ENCODE measurements at regions of chr7 and their contacts with region 1.

Region 1: DNA sequence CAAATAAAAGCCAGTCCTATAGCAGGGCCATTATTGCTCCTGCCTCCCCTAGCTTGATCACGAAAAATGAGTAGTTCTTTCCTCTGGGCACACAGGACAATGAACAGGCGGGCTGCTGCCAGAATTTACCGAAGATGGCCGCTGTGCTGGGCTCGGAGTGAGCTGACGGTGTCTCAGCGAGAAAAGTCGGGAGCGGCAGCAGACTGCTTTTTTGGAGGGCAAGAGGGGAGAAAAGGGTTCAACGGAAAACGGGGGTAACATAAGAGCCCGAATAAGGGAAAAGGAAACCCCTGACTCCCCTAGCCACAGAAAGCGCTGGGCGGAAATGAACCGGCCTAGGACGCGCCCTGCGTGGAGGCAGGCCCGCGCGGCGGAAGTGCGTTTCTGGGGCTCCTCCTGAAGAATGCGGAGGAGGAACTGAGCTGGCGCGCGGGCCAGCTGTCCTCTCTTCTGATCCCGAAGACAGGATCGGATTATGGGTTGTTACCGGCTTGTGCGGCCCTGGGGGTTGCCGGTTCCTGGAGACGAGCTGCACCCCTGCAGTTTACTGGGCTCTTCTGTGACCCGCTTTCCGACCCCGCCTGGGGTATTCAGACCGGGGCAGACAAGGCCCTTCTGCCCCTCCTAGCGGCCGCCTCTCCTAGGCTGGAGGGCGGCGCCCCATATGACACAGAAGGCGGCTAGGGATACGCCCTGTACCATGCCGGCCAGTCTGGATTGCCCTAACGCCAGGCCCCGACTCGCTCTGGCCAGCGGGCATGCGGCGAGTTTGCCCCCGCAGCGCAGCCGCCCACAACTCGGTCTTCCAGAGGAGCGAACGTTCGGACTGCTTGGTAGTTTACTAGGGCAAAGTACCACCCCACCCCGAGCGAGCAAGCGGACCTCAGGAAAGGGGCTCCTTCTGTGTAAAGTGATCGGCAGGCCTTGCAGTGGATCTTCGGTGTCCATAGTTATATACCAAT is 30.1 kb upstream of the KMT2E start:
- DNase-seq: peak; percentile 77
- ATAC-seq: peak; percentile 95
- H3K4me3 ChIP-seq: peak overlapping the region; percentile 68 to 76
- H3K27ac ChIP-seq: peak overlapping the region; percentile 91
- H3K4me1 ChIP-seq: peaks cover 31 to 40% of the 10 kb centered on the region in 2 experiments
- H3K27me3 ChIP-seq: no peaks in the 10 kb centered on the region
- CTCF ChIP-seq: peak in 2 of 3 experiments; percentile 22 to 39; a peak in 4 of 6 replicates
- POLR2A ChIP-seq: peak; percentile 72
- RAD21 ChIP-seq: no peak

Region 2: GRCh38 chr7:104943502-104944343 is 40.1 kb before region 1 on chr7:
- CTCF ChIA-PET with region 1: interaction called, 14 read pairs
- POLR2A ChIA-PET with region 1: no interaction called
- RAD21 ChIA-PET with region 1: no interaction called
- intact Hi-C with region 1: no loop called
- DNase-seq: peak; percentile 94
- ATAC-seq: peak; percentile 81
- H3K4me3 ChIP-seq: no peak overlapping the region
- H3K27ac ChIP-seq: peak overlapping the region; percentile 7; the same call in 1 of the 2 replicates
- H3K4me1 ChIP-seq: peaks cover 27 to 35% of the 10 kb centered on the region in 2 experiments
- H3K27me3 ChIP-seq: peaks cover 4% of the 10 kb centered on the region; the same call in 1 of the 2 replicates
- CTCF ChIP-seq: no peak
- POLR2A ChIP-seq: no peak
- RAD21 ChIP-seq: no peak

Region 3: DNA sequence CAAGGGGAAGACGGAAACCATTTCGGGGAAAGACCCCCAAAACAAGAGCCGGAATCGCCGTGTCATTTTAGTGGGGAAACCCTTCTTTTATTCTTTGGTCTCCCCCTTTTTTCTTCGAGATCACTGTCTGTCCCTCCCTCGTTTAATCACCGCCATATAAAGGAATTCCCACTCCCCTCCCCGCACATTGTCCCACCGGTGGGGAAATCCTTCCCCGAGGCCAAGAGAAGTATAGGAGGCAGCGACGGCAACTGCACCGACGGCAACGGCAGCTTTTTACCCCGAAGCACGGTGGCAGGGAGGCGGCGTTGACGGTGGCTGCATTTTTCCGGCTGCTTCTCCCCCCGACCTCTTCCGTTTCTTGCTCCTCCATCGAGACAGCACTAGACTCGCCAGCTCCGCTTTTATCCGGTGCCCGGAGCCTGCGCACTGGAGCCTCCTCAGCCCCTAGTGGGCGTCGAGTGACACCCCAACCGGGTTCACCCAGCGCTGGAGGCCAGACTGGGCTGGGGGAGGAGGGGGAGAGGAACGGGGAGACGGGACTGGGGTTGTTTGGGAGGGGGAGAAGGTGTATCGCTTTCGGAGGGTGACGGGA is 29.5 kb after region 1 on chr7:
- CTCF ChIA-PET with region 1: interaction called, 7 read pairs
- POLR2A ChIA-PET with region 1: interaction called, 18 read pairs
- RAD21 ChIA-PET with region 1: no interaction called
- intact Hi-C with region 1: loop called (anchors 1 kb)
- DNase-seq: peak; percentile 77
- ATAC-seq: peak; percentile 69
- H3K4me3 ChIP-seq: peak overlapping the region; percentile 89 to 95
- H3K27ac ChIP-seq: peak overlapping the region; percentile 98
- H3K4me1 ChIP-seq: peaks cover 11 to 49% of the 10 kb centered on the region in 2 experiments; a peak in 3 of 4 replicates
- H3K27me3 ChIP-seq: no peaks in the 10 kb centered on the region
- CTCF ChIP-seq: peak in 2 of 3 experiments; percentile 53 to 57; a peak in 4 of 6 replicates
- POLR2A ChIP-seq: peak; percentile 39
- RAD21 ChIP-seq: no peak

Region 4: GRCh38 chr7:105046414-105046813 is 62.6 kb after region 1 on chr7:
- CTCF ChIA-PET with region 1: interaction called, 7 read pairs
- POLR2A ChIA-PET with region 1: no interaction called
- RAD21 ChIA-PET with region 1: no interaction called
- intact Hi-C with region 1: loop called (anchors 1 kb)
- DNase-seq: no peak
- ATAC-seq: no peak
- H3K4me3 ChIP-seq: no peak overlapping the region
- H3K27ac ChIP-seq: no peak overlapping the region
- H3K4me1 ChIP-seq: no peaks in the 10 kb centered on the region
- H3K27me3 ChIP-seq: no peaks in the 10 kb centered on the region
- CTCF ChIP-seq: no peak
- POLR2A ChIP-seq: no peak
- RAD21 ChIP-seq: no peak

Region 5: DNA sequence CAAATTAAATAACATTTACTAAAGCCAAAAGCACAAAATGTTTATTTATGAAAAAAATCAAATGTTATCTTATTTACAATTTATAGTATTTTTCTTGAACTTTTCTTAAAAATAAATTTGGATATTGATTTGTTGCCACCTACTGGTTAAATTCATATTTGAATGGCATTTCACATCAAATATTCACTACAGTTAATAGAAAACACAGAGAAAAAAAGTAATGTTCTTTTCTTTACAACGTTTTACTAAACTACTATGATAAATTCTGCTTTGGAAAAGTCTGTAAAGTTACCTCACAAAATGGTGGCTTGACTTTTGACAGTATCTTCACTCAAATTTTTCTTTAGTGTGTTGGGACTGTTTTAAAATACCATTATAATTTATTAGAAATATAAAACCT is 352.1 kb after region 1 on chr7:
- CTCF ChIA-PET with region 1: interaction called, 4 read pairs
- POLR2A ChIA-PET with region 1: no interaction called
- RAD21 ChIA-PET with region 1: no interaction called
- intact Hi-C with region 1: loop called (anchors 5 kb)
- DNase-seq: no peak
- ATAC-seq: no peak
- H3K4me3 ChIP-seq: no peak overlapping the region
- H3K27ac ChIP-seq: no peak overlapping the region
- H3K4me1 ChIP-seq: peaks cover 3 to 4% of the 10 kb centered on the region in 2 experiments; a peak in 2 of 4 replicates
- H3K27me3 ChIP-seq: no peaks in the 10 kb centered on the region
- CTCF ChIP-seq: peak; percentile 7 to 37 (median 33); a peak in 2 of 6 replicates
- POLR2A ChIP-seq: no peak
- RAD21 ChIP-seq: peak; percentile 66

Region 6: DNA sequence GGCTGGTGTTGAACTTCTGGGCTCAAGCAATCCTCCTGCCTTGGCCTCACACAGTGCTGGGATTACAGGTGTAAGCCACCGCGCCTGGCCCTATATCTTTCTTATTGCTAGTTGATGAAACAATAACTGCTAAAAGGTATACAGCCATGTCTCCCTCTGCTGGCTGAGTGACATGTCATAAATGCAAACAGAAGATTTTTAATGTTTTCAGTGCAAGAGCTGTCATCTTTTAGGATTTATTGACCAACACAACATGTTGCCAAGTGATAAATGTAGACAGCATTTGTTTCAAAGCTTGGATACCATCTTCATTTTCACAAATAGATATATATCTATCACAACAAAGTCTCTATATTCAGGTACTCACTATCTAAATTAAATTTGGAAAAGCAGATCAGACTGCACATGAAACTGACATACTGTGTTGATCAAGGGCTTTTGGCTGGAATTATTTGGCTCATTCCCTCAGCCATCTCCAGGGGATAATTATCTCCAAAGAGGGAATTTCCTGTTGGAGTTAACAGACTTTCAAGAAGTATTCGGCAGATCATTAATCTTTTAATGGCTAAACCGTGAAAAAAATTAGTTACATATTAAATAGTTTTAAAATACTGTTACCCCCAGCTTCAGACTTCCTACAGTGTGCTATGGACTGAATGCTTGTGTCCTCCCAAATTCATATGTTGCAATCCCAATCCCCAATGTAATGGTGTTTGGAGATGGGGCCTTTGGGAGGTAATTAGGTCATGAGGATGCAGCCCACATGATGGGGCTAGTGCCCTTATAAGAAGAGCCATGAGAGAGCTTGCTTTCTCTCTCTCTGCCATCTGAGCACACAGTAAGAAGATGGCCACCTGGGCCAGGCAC is 446.1 kb after region 1 on chr7:
- CTCF ChIA-PET with region 1: interaction called, 4 read pairs
- POLR2A ChIA-PET with region 1: no interaction called
- RAD21 ChIA-PET with region 1: interaction called in 1 of 2 experiments, 3 read pairs
- intact Hi-C with region 1: loop called (anchors 5 kb)
- DNase-seq: peak; percentile 34
- ATAC-seq: peak; percentile 85
- H3K4me3 ChIP-seq: no peak overlapping the region
- H3K27ac ChIP-seq: no peak overlapping the region
- H3K4me1 ChIP-seq: no peaks in the 10 kb centered on the region
- H3K27me3 ChIP-seq: no peaks in the 10 kb centered on the region
- CTCF ChIP-seq: peak; percentile 51 to 76 (median 66)
- POLR2A ChIP-seq: no peak
- RAD21 ChIP-seq: peak; percentile 84

Region 7: GRCh38 chr7:105589356-105590077 is 605.7 kb after region 1 on chr7:
- CTCF ChIA-PET with region 1: no interaction called
- POLR2A ChIA-PET with region 1: no interaction called
- RAD21 ChIA-PET with region 1: no interaction called
- intact Hi-C with region 1: loop called (anchors 10 kb)
- DNase-seq: peak; percentile 55
- ATAC-seq: peak; percentile 98
- H3K4me3 ChIP-seq: no peak overlapping the region
- H3K27ac ChIP-seq: no peak overlapping the region
- H3K4me1 ChIP-seq: no peaks in the 10 kb centered on the region
- H3K27me3 ChIP-seq: no peaks in the 10 kb centered on the region
- CTCF ChIP-seq: peak; percentile 71 to 76 (median 73)
- POLR2A ChIP-seq: no peak
- RAD21 ChIP-seq: peak; percentile 91

Region 8: GRCh38 chr7:106009403-106010226 is 1025.8 kb after region 1 on chr7:
- CTCF ChIA-PET with region 1: no interaction called
- POLR2A ChIA-PET with region 1: no interaction called
- RAD21 ChIA-PET with region 1: no interaction called
- intact Hi-C with region 1: no loop called
- DNase-seq: peak; percentile 63
- ATAC-seq: peak; percentile 99
- H3K4me3 ChIP-seq: peak overlapping the region in 1 of 2 experiments; percentile 19; a peak in 2 of 4 replicates
- H3K27ac ChIP-seq: no peak overlapping the region
- H3K4me1 ChIP-seq: peaks cover 8 to 12% of the 10 kb centered on the region in 2 experiments; a peak in 3 of 4 replicates
- H3K27me3 ChIP-seq: no peaks in the 10 kb centered on the region
- CTCF ChIP-seq: peak; percentile 96 to 98 (median 97)
- POLR2A ChIP-seq: no peak
- RAD21 ChIP-seq: peak; percentile 98